ENCODE measurements at regions of chr1 and their contacts with region 1.

Region 1: DNA sequence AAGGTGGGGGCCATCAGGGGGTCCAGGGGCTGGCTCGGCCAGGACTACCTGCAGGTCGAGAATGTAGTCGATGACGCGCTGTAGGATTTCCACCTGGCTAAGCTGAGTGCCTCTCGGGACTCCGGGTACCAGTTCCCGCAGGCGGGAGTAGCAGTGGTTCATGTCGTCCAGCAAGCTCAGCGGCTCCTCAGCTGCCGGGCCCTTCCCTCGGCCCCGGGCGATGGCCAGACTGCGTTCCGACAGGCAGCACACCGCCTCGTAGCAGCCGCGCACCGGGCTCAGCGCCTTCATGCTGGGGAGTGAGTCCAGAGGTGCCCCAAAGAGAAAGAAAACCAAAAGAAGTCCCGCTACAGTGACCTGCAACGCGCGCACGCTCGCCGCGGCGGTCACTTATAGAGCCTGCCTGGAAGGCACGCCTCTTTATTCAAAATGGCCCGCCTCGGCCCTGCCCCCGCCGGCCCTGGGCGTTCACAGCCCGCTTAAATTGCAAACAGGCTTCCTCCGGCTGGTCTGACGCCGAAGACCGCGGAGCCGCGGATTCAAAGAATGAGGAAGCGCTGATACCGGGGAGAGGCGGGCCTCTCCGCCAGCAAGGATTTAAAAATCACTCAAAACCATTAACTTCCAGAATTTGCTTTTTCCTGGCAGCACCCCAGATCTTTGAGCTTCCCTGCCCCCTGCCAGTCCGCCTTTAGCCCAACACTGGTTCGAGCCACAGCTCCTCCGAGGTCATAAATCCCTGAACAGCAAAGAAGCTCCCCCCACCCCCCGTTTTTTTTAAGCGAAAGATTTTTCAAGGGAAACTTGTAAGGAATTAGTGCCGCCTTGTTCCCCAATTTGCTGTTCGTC is at the start of gene ID3:
- DNase-seq: peak; percentile 97
- ATAC-seq: peak; percentile 73
- H3K4me3 ChIP-seq: peak within 1 kb of the TSS; percentile 87 to 100 (median 95)
- H3K4me3 Mint-ChIP-seq: peak within 1 kb of the TSS; percentile 93
- H3K27ac ChIP-seq: peak within 1 kb of the TSS; percentile 83 to 91
- H3K27ac Mint-ChIP-seq: peak within 1 kb of the TSS; percentile 94
- H3K4me1 ChIP-seq: peaks cover 66 to 75% of the 10 kb centered on the region in 2 donors
- H3K4me1 Mint-ChIP-seq: peaks cover 72% of the 10 kb centered on the region
- H3K27me3 ChIP-seq: no peaks in the 10 kb centered on the region
- H3K27me3 Mint-ChIP-seq: no peaks in the 10 kb centered on the region
- CTCF ChIP-seq: no peak
- total RNA-seq, gene ID3: 367 and 370 TPM in 2 replicates

Region 2: GRCh38 chr1:23514111-23514679 is 45.2 kb before region 1 on chr1:
- CTCF ChIA-PET with region 1: no interaction called
- POLR2A ChIA-PET with region 1: no interaction called
- intact Hi-C with region 1: no loop called
- DNase-seq: no peak
- ATAC-seq: no peak
- H3K4me3 ChIP-seq: no peak overlapping the region
- H3K4me3 Mint-ChIP-seq: no peak overlapping the region
- H3K27ac ChIP-seq: no peak overlapping the region
- H3K27ac Mint-ChIP-seq: no peak overlapping the region
- H3K4me1 ChIP-seq: peaks cover 0 to 4% of the 10 kb centered on the region in 2 donors
- H3K4me1 Mint-ChIP-seq: no peaks in the 10 kb centered on the region
- H3K27me3 ChIP-seq: no peaks in the 10 kb centered on the region
- H3K27me3 Mint-ChIP-seq: no peaks in the 10 kb centered on the region
- CTCF ChIP-seq: no peak

Region 3: DNA sequence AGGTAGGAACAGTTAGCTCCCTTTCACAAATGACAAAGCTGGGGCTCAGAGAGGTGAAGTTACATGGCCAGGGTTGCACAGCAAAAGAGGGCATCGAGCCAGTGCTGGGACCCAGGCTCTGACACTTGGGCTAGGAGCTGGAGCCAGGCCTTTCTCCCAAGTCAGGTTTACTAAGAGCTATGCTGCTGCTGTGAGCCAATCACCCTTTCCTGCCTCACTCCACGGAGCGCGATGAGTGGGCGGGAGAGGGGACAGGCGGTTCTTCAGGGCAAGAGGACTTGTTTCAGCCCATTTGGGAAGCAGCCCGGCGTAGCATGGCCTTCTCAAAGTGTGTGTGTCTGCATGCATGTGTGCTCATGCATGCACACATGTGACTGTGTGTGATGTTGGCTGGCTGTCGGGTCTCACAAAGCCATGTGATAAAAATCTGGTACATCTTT is 10.6 kb before region 1 on chr1:
- CTCF ChIA-PET with region 1: interaction called, 74 read pairs
- POLR2A ChIA-PET with region 1: interaction called, 17 read pairs
- intact Hi-C with region 1: loop called (anchors 1 kb)
- DNase-seq: peak; percentile 77
- ATAC-seq: peak; percentile 71
- H3K4me3 ChIP-seq: no peak overlapping the region
- H3K4me3 Mint-ChIP-seq: peak overlapping the region; percentile 39
- H3K27ac ChIP-seq: peak overlapping the region; percentile 17 to 73
- H3K27ac Mint-ChIP-seq: peak overlapping the region; percentile 76
- H3K4me1 ChIP-seq: peaks cover 25 to 43% of the 10 kb centered on the region in 2 donors
- H3K4me1 Mint-ChIP-seq: peaks cover 45% of the 10 kb centered on the region
- H3K27me3 ChIP-seq: no peaks in the 10 kb centered on the region
- H3K27me3 Mint-ChIP-seq: no peaks in the 10 kb centered on the region
- CTCF ChIP-seq: no peak

Region 4: GRCh38 chr1:23591460-23592208 is 32.3 kb after region 1 on chr1:
- CTCF ChIA-PET with region 1: interaction called, 227 read pairs
- POLR2A ChIA-PET with region 1: interaction called, 164 read pairs
- intact Hi-C with region 1: loop called (anchors 1 kb)
- DNase-seq: peak; percentile 62
- ATAC-seq: peak; percentile 85
- H3K4me3 ChIP-seq: peak overlapping the region in 1 of 5 experiments; percentile 31
- H3K4me3 Mint-ChIP-seq: peak overlapping the region; percentile 81
- H3K27ac ChIP-seq: peak overlapping the region; percentile 81 to 83
- H3K27ac Mint-ChIP-seq: peak overlapping the region; percentile 96
- H3K4me1 ChIP-seq: peaks cover 84 to 85% of the 10 kb centered on the region in 2 donors
- H3K4me1 Mint-ChIP-seq: peaks cover 86% of the 10 kb centered on the region
- H3K27me3 ChIP-seq: no peaks in the 10 kb centered on the region
- H3K27me3 Mint-ChIP-seq: no peaks in the 10 kb centered on the region
- CTCF ChIP-seq: no peak

Region 5: GRCh38 chr1:23613191-23614031 is 54.1 kb after region 1 on chr1:
- CTCF ChIA-PET with region 1: interaction called, 36 read pairs
- POLR2A ChIA-PET with region 1: interaction called, 110 read pairs
- intact Hi-C with region 1: no loop called
- DNase-seq: peak; percentile 62
- ATAC-seq: peak; percentile 52
- H3K4me3 ChIP-seq: no peak overlapping the region
- H3K4me3 Mint-ChIP-seq: peak overlapping the region; percentile 75
- H3K27ac ChIP-seq: peak overlapping the region; percentile 76 to 88
- H3K27ac Mint-ChIP-seq: peak overlapping the region; percentile 86
- H3K4me1 ChIP-seq: peaks cover 62 to 76% of the 10 kb centered on the region in 2 donors
- H3K4me1 Mint-ChIP-seq: peaks cover 79% of the 10 kb centered on the region
- H3K27me3 ChIP-seq: no peaks in the 10 kb centered on the region
- H3K27me3 Mint-ChIP-seq: no peaks in the 10 kb centered on the region
- CTCF ChIP-seq: no peak

Region 6: GRCh38 chr1:23627069-23627735 is 67.8 kb after region 1 on chr1:
- CTCF ChIA-PET with region 1: interaction called, 1,420 read pairs
- POLR2A ChIA-PET with region 1: interaction called, 110 read pairs
- intact Hi-C with region 1: no loop called
- DNase-seq: peak; percentile 72
- ATAC-seq: peak; percentile 38
- H3K4me3 ChIP-seq: peak overlapping the region in 4 of 5 experiments; percentile 15 to 46 (median 25)
- H3K4me3 Mint-ChIP-seq: peak overlapping the region; percentile 76
- H3K27ac ChIP-seq: peak overlapping the region; percentile 62 to 65
- H3K27ac Mint-ChIP-seq: peak overlapping the region; percentile 90
- H3K4me1 ChIP-seq: peaks cover 73 to 88% of the 10 kb centered on the region in 2 donors
- H3K4me1 Mint-ChIP-seq: peaks cover 73% of the 10 kb centered on the region
- H3K27me3 ChIP-seq: no peaks in the 10 kb centered on the region
- H3K27me3 Mint-ChIP-seq: no peaks in the 10 kb centered on the region
- CTCF ChIP-seq: no peak

Measured in B cell (primary cell).